K562 (cell line): ENCODE measurements at regions of chrX and their contacts with region 1.

Region 1: DNA sequence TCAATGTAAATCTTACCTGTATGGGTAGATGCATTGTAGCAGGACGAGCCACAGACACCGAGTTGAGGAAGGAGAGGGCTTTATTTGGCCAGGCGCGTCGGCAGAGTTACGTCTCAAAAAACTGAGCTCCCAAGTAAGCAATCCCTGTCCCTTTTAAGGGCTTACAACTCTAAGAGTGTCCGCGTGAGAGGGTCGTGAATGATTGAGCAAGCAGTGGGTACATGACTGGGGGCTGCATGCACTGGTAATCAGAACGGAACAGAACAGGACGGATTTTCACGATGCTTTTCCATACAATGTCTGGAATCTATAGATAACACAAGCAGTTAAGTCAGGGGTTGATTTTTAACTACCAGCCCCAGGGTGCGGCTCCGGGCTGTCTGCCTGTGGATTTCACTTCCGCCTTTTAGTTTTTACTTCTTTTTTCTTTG is 524.9 kb upstream of the HTR2C start:
- DNase-seq: peak in 2 of 4 experiments; percentile 35 to 79
- ATAC-seq: peak; percentile 71
- H3K4me3 ChIP-seq: peak overlapping the region; percentile 47
- H3K27ac ChIP-seq: peak overlapping the region; percentile 86
- H3K4me1 ChIP-seq: peaks cover 4% of the 10 kb centered on the region in 2 experiments; a peak in 3 of 5 replicates
- H3K27me3 ChIP-seq: no peaks in the 10 kb centered on the region
- CTCF ChIP-seq: no peak
- EP300 ChIP-seq: peak; percentile 92
- POLR2A ChIP-seq: peak; percentile 47; the same call in 1 of the 2 replicates
- RAD21 ChIP-seq: no peak

Region 2: DNA sequence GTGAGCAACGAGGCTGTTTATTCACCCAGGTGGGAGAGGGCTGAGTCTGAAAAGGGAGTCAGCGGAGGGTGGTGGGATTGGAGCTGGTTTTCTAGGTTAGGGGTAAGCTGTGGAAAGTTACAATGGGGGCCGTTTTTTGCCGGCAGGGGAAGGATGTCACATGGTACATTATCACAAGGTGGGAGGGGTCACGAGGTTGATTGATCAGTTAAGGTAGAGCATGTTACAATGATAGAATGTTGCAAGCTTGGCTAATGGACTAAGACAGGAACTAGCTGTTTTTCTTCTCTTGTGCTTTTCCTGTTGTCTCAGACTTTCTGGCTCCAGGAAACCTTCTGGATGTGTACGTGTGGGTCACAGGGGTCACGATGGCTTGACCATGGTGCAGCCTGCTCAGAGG is 11.4 kb before region 1 on chrX:
- CTCF ChIA-PET with region 1: no interaction called
- POLR2A ChIA-PET with region 1: interaction called, 12 read pairs
- in situ Hi-C with region 1: no loop called
- intact Hi-C with region 1: no loop called
- DNase-seq: no peak
- ATAC-seq: peak; percentile 26
- H3K4me3 ChIP-seq: no peak overlapping the region
- H3K27ac ChIP-seq: 0 out of 3 replicates have a peak overlapping the region, but pooled peaks have one; percentile 26
- H3K4me1 ChIP-seq: peaks cover 0 to 18% of the 10 kb centered on the region in 2 experiments; a peak in 3 of 5 replicates
- H3K27me3 ChIP-seq: no peaks in the 10 kb centered on the region
- CTCF ChIP-seq: no peak
- EP300 ChIP-seq: no peak
- POLR2A ChIP-seq: no peak
- RAD21 ChIP-seq: no peak

Region 3: GRCh38 chrX:114087543-114087942 is 28.5 kb after region 1 on chrX:
- CTCF ChIA-PET with region 1: no interaction called
- POLR2A ChIA-PET with region 1: no interaction called
- in situ Hi-C with region 1: no loop called
- intact Hi-C with region 1: no loop called
- DNase-seq: no peak
- ATAC-seq: peak; percentile 56; the same call in 1 of the 3 replicates
- H3K4me3 ChIP-seq: no peak overlapping the region
- H3K27ac ChIP-seq: no peak overlapping the region
- H3K4me1 ChIP-seq: no peaks in the 10 kb centered on the region
- H3K27me3 ChIP-seq: no peaks in the 10 kb centered on the region
- CTCF ChIP-seq: no peak
- EP300 ChIP-seq: no peak
- POLR2A ChIP-seq: no peak
- RAD21 ChIP-seq: no peak